Posterior vena cava (tissue), 2 donors: ENCODE measurements at regions of chr1 and their contacts with region 1.

Region 1: GRCh38 chr1:116987256-116987555 is 14.4 kb upstream of the CD101 start:
- DNase-seq: no peak

Region 2: GRCh38 chr1:116806245-116806644 is 181.0 kb before region 1 on chr1:
- intact Hi-C with region 1: no loop called
- DNase-seq: no peak

Region 3: GRCh38 chr1:116878804-116879477 is 108.3 kb before region 1 on chr1:
- intact Hi-C with region 1: loop called in 1 of 2 experiments (anchors 10 kb)
- DNase-seq: no peak